Naive thymus-derived CD8-positive, alpha-beta T cell (primary cell): ENCODE measurements at regions of chr1 and their contacts with region 1.

Region 1: GRCh38 chr1:150561974-150562445 is 12.8 kb downstream of the ADAMTSL4 start:
- DNase-seq: peak; percentile 71 to 87 (median 82)
- ATAC-seq: peak; percentile 24 to 48
- H3K4me3 Mint-ChIP-seq: peak overlapping the region; percentile 92 to 100 (median 96)
- H3K27ac Mint-ChIP-seq: peak overlapping the region; percentile 97 to 100 (median 99)
- H3K4me1 Mint-ChIP-seq: peaks cover 28 to 62% (median 58%) of the 10 kb centered on the region in 4 donors
- H3K27me3 Mint-ChIP-seq: no peaks in the 10 kb centered on the region

Region 2: DNA sequence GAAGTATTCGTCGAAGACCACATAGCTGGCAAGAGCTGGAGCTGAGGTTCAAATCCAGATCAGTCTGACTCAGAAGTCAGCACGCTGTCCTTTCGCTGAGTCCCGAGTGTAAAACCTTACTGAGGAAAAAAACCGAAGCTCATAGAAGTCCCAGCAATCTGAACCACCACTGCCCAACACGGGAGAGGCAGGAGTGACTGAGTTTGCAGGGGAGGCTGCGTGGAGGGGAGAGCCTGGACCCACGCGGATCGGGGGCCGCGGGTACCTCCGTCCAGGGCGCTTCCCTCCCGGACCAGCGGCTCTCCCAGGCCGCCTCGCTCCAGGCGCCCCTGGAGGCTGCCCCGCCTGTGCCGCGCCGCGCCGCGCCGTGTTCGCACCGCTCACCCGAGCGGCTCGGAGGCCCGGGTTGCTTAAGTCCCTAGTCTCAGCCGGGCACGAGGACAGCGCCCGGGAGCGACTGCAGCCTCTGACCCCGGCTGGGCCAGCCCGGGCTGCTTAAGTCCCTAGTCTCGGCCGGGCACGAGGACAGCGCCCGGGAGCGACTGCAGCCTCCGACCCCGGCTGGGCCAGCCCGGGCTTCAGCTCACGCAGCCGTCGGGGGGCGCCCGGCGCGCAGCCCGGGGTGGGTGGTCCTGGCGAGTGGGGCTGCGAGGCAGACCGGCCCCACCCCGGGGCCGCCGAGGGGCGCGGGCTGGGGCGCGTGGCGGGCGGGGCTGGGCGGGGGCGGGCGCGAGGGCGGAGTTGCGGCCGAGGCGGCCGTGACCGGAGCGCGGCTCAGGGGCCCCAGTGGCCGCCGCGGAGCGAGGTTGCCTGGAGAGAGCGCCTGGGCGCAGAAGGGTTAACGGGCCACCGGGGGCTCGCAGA is 13.1 kb before region 1 on chr1 and contains the start of gene ADAMTSL4:
- POLR2A ChIA-PET with region 1: interaction called, 28 read pairs
- DNase-seq: peak in 2 of 10 donors; percentile 38 to 45
- ATAC-seq: peak; percentile 81 to 83
- H3K4me3 Mint-ChIP-seq: peak within 1 kb of the TSS; percentile 71 to 89 (median 82)
- H3K27ac Mint-ChIP-seq: peak within 1 kb of the TSS in 5 of 10 donors; percentile 18 to 81 (median 59)
- H3K4me1 Mint-ChIP-seq: peaks cover 7 to 30% (median 24%) of the 10 kb centered on the region in 4 donors
- H3K27me3 Mint-ChIP-seq: peaks cover 13 to 41% (median 17%) of the 10 kb centered on the region in 5 donors
- polyA plus RNA-seq, gene ADAMTSL4: 0.32 TPM in 1 of 3 donors, not detected in the others

Region 3: GRCh38 chr1:150578965-150579798 is 17.2 kb after region 1 on chr1 and contains the start of gene MCL1:
- POLR2A ChIA-PET with region 1: interaction called, 1,195 read pairs
- DNase-seq: peak; percentile 73 to 94 (median 86)
- ATAC-seq: peak; percentile 71 to 75
- H3K4me3 Mint-ChIP-seq: peak within 1 kb of the TSS; percentile 94 to 99 (median 97)
- H3K27ac Mint-ChIP-seq: peak within 1 kb of the TSS; percentile 95 to 99 (median 98)
- H3K4me1 Mint-ChIP-seq: peaks cover 23 to 42% (median 35%) of the 10 kb centered on the region in 4 donors
- H3K27me3 Mint-ChIP-seq: no peaks in the 10 kb centered on the region
- polyA plus RNA-seq, gene MCL1: 125 to 170 (median 146) TPM

Region 4: DNA sequence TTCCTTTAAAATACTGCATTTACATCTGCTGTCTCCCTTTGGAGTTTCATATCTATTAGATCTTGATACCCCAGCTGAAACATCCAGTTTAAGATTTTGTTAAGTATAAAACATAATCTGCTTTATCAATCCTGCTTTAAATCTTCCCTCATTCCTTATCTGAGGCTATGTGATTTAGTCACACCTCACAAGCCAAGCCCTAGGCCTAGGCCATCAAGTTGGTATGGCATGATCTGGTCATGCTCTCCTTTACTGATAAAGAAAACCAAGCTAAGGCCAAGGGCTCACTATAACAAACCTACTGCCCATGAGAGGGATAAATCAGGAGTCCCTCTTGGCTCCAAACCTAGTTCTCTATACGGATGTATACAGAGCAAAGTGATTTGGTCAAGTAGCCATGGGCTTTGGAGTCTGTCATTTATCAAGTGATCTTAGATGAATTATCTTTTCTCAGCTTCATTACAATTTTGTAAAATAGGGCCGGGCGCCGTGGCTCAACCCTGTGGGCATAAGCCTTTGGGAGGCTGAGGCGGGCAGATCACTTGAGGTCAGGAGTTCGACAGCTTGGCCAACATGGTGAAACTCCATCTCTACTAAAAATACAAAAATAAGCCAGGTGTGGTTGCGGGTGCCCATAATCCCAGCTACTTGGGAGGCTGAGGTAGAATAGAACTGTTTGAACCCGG is 44.6 kb after region 1 on chr1:
- POLR2A ChIA-PET with region 1: interaction called, 198 read pairs
- DNase-seq: no peak
- ATAC-seq: no peak
- H3K4me3 Mint-ChIP-seq: no peak overlapping the region
- H3K27ac Mint-ChIP-seq: peak overlapping the region in 4 of 10 donors; percentile 25 to 79 (median 63)
- H3K4me1 Mint-ChIP-seq: peaks cover 4 to 34% (median 17%) of the 10 kb centered on the region in 4 donors
- H3K27me3 Mint-ChIP-seq: no peaks in the 10 kb centered on the region

Region 5: GRCh38 chr1:150621497-150622302 is 59.7 kb after region 1 on chr1:
- POLR2A ChIA-PET with region 1: interaction called, 198 read pairs
- DNase-seq: peak; percentile 26 to 80 (median 60)
- ATAC-seq: peak; percentile 73 to 81
- H3K4me3 Mint-ChIP-seq: peak overlapping the region in 6 of 10 donors; percentile 14 to 35 (median 27)
- H3K27ac Mint-ChIP-seq: peak overlapping the region; percentile 74 to 92 (median 86)
- H3K4me1 Mint-ChIP-seq: peaks cover 23 to 60% (median 52%) of the 10 kb centered on the region in 4 donors
- H3K27me3 Mint-ChIP-seq: no peaks in the 10 kb centered on the region

Region 6: GRCh38 chr1:150629115-150629928 is 67.3 kb after region 1 on chr1 and contains the start of gene ENSA:
- POLR2A ChIA-PET with region 1: interaction called, 198 read pairs
- DNase-seq: peak; percentile 86 to 99 (median 96)
- ATAC-seq: peak; percentile 86 to 88
- H3K4me3 Mint-ChIP-seq: no peak within 1 kb of the TSS
- H3K27ac Mint-ChIP-seq: no peak within 1 kb of the TSS
- H3K4me1 Mint-ChIP-seq: peaks cover 12 to 20% (median 18%) of the 10 kb centered on the region in 4 donors
- H3K27me3 Mint-ChIP-seq: no peaks in the 10 kb centered on the region
- polyA plus RNA-seq, gene ENSA: 55.2 to 64.4 (median 63.7) TPM